A673 (cell line): ENCODE measurements at regions of chr2 and their contacts with region 1.

Region 1: DNA sequence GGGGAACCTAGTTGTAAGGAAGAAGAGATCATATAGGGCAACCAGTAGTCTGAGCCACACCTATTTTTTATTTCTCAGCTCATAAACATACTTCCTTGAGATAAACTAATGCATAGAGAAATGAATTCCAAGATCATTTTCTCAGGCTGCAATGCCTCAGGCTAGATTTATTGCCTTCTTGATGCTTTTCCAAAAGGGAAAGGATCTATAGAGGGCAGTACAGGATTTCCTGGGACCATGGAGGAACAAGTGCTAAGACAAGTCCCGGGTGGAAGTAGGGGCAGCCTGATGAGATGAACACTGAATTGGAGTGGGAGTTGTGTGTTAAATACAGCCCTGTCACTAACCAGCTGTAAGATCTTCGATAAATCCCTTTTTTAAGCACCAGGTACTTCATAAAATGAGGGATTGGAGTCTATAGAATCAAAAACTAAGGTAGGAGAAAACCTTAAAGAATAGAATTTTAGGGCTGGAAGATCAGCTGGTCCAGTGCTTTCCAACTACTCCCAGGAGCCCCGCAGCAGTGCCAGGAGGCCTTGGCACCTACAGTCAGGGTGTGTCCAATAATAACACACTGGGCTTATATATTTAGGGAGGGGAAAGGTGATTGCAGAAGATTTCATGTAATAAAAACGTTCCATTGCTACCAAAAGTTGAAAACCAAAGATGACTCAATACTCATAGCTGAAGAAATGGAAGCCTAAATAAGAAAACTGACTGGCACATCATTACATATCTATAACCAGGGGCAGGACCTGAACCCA is 58.1 kb downstream of the SERTAD2 start:
- DNase-seq: peak; percentile 47
- H3K4me3 ChIP-seq: no peak overlapping the region
- H3K27ac ChIP-seq: no peak overlapping the region
- H3K4me1 ChIP-seq: no peaks in the 10 kb centered on the region
- H3K27me3 ChIP-seq: no peaks in the 10 kb centered on the region
- CTCF ChIP-seq: peak; percentile 57

Region 2: GRCh38 chr2:64615844-64616536 is 20.4 kb after region 1 on chr2:
- CTCF ChIA-PET with region 1: no interaction called
- POLR2A ChIA-PET with region 1: no interaction called
- intact Hi-C with region 1: loop called (anchors 2 kb)
- DNase-seq: no peak
- H3K4me3 ChIP-seq: no peak overlapping the region
- H3K27ac ChIP-seq: no peak overlapping the region
- H3K4me1 ChIP-seq: peaks cover 9% of the 10 kb centered on the region
- H3K27me3 ChIP-seq: no peaks in the 10 kb centered on the region
- CTCF ChIP-seq: no peak